ENCODE measurements at regions of chr5 and their contacts with region 1.

Region 1: DNA sequence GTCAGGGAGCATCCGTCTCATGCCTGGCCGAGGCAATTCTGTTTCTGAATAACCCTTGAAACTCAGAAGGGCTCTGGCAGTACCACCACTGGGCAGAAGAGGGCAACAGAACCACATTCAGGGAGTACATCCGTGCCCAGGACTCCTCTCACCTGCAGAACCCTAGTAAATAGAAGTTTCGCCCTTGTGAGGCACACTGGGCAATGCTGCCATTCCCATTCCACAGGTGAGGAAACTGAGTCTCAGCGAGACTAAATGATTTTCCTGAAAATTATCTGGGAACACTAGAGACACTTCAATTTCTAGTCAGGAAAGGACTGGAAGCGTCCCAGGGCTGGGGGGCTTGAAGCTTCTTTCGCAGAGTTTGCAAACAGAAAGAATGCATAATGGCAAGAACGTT is 74.7 kb downstream of the FGF1 start:
- DNase-seq: peak; percentile 48
- ATAC-seq: peak; percentile 97
- H3K4me3 ChIP-seq: no peak overlapping the region
- H3K27ac ChIP-seq: no peak overlapping the region
- H3K4me1 ChIP-seq: no peaks in the 10 kb centered on the region
- H3K27me3 ChIP-seq: peaks cover 0 to 19% of the 10 kb centered on the region in 2 experiments; a peak in 2 of 5 replicates
- CTCF ChIP-seq: peak; percentile 86
- EP300 ChIP-seq: no peak
- POLR2A ChIP-seq: no peak
- RAD21 ChIP-seq: peak; percentile 69

Region 2: DNA sequence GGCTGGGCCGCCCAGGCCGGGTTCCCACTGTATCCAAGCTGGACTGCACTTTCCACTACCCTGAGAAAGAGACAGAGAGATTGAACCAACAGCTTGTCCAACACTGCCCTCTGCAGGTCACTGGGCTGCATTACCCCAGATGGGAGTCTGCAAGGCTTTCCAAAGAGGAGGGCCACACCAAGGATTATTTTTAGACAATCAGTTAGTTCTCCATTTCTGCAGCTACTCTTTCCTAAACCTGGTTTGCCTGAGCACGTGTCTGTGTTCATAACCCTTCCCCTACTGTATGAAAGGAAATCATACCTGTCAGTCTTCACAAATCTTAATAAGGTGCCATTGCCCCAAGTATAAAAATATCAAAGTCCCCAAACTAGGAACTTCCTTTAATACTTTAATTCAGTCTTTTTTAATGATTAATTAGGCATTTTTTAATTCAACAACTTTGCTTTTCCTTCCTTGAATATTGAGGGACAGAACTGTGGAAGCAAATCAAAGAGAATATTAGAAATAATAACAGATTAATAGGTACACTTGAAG is 88.1 kb after region 1 on chr5:
- CTCF ChIA-PET with region 1: interaction called, 20 read pairs
- POLR2A ChIA-PET with region 1: no interaction called
- in situ Hi-C with region 1: no loop called
- intact Hi-C with region 1: loop called (anchors 1 kb)
- DNase-seq: peak; percentile 79
- ATAC-seq: peak; percentile 99
- H3K4me3 ChIP-seq: no peak overlapping the region
- H3K27ac ChIP-seq: no peak overlapping the region
- H3K4me1 ChIP-seq: no peaks in the 10 kb centered on the region; the same call in 1 of the 2 replicates
- H3K27me3 ChIP-seq: peaks cover 0 to 6% of the 10 kb centered on the region in 2 experiments; a peak in 1 of 5 replicates
- CTCF ChIP-seq: peak; percentile 95
- EP300 ChIP-seq: no peak
- POLR2A ChIP-seq: no peak
- RAD21 ChIP-seq: peak; percentile 95

Measured in HepG2 (cell line).